CD8-positive, alpha-beta T cell (primary cell): ENCODE measurements at regions of chr17 and their contacts with region 1.

Region 1: DNA sequence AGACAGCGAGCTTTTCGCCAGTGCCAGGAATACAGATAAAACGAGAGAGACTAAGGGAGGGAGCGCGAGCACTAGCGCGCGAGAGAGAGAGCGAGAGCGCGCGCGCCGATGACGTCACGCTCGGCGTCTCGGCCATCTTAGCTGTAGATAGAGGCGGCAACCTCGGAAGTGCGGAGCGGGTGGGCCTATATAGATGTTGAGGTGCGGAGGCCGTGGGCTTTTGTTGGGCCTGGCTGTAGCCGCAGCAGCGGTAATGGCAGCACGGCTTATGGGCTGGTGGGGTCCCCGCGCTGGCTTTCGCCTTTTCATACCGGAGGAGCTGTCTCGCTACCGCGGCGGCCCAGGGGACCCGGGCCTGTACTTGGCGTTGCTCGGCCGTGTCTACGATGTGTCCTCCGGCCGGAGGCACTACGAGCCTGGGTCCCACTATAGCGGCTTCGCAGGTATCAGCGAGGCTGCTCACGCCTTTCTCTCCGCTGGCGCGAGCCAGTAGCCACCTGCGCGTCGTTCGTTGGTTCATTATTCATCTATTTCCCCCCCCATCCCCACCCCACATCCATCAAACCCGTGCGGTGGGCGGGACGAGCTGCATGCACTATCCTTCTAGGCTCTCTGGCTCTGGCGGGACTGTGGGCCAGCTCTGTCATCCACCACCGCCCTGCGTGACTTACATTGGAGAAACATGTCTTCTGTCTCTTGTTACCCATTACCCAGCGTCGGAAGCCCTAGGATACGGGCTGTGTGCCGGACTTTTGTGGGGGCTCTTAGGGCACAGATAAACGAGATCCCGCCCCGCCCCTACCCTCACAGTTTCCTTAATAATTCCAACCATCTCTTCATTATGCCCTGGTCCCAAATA is 795 bp downstream of the CYB5D2 start:
- DNase-seq: peak; percentile 81 to 98 (median 91)
- ATAC-seq: peak; percentile 63
- H3K4me3 ChIP-seq: peak overlapping the region; percentile 72 to 88
- H3K4me3 Mint-ChIP-seq: peak overlapping the region; percentile 99
- H3K27ac ChIP-seq: peak overlapping the region; percentile 98
- H3K27ac Mint-ChIP-seq: peak overlapping the region; percentile 100
- H3K4me1 ChIP-seq: peaks cover 42% of the 10 kb centered on the region
- H3K4me1 Mint-ChIP-seq: peaks cover 43% of the 10 kb centered on the region
- H3K27me3 ChIP-seq: no peaks in the 10 kb centered on the region
- H3K27me3 Mint-ChIP-seq: no peaks in the 10 kb centered on the region
- CTCF ChIP-seq: no peak

Region 2: DNA sequence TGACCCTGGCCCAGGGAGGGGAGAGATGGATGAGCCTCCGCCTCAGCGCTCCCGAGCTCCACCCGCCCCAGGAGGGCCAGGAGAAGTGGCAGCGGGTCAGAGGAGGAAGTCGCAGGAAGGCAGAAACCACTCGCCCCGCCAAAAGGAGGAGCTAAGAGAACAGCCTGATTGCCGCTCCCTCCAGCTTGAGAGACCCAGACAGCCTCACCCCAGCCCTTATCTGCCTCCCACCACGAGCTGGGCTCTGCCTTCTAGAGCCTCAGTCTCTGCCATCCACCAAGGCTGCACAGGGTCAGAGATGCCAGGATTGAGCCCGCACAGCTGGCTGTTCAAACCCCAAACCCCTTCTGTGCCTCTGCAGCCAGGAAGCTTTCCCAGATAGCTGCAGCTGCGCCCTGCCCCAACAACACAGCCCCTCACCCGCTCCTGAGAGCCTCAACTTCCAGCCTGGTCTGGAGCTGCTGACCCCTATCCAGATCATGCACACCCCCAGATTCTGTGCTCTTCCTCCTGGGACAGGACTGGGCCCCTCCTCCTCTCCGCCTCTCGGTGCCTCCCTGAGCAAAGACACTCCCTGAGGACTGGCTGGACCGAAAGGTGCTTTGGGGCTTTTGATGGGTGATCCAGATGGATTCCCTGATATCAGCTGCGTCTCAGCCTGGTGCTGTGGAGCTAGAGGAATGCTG is 178.5 kb before region 1 on chr17:
- CTCF ChIA-PET with region 1: interaction called, 3 read pairs
- POLR2A ChIA-PET with region 1: interaction called, 5 read pairs
- intact Hi-C with region 1: loop called (anchors 2 kb)
- DNase-seq: peak; percentile 33 to 81 (median 73)
- ATAC-seq: peak; percentile 51
- H3K4me3 ChIP-seq: peak overlapping the region; percentile 71 to 83
- H3K4me3 Mint-ChIP-seq: peak overlapping the region; percentile 91
- H3K27ac ChIP-seq: peak overlapping the region; percentile 76 to 77
- H3K27ac Mint-ChIP-seq: peak overlapping the region; percentile 94
- H3K4me1 ChIP-seq: peaks cover 39% of the 10 kb centered on the region
- H3K4me1 Mint-ChIP-seq: peaks cover 40% of the 10 kb centered on the region
- H3K27me3 ChIP-seq: no peaks in the 10 kb centered on the region
- H3K27me3 Mint-ChIP-seq: no peaks in the 10 kb centered on the region
- CTCF ChIP-seq: no peak

Region 3: GRCh38 chr17:4167786-4168185 is 24.0 kb after region 1 on chr17:
- CTCF ChIA-PET with region 1: no interaction called
- POLR2A ChIA-PET with region 1: interaction called, 20 read pairs
- intact Hi-C with region 1: no loop called
- DNase-seq: peak in 5 of 9 experiments; percentile 19 to 57 (median 49)
- ATAC-seq: peak; percentile 66
- H3K4me3 ChIP-seq: no peak overlapping the region
- H3K4me3 Mint-ChIP-seq: no peak overlapping the region
- H3K27ac ChIP-seq: peak overlapping the region in 1 of 2 experiments; percentile 0
- H3K27ac Mint-ChIP-seq: peak overlapping the region; percentile 88
- H3K4me1 ChIP-seq: peaks cover 8% of the 10 kb centered on the region
- H3K4me1 Mint-ChIP-seq: peaks cover 10% of the 10 kb centered on the region
- H3K27me3 ChIP-seq: no peaks in the 10 kb centered on the region
- H3K27me3 Mint-ChIP-seq: no peaks in the 10 kb centered on the region
- CTCF ChIP-seq: no peak

Region 4: GRCh38 chr17:4263282-4264215 is 119.8 kb after region 1 on chr17 and contains the start of gene ANKFY1:
- CTCF ChIA-PET with region 1: no interaction called
- POLR2A ChIA-PET with region 1: interaction called, 3 read pairs
- intact Hi-C with region 1: loop called (anchors 1 to 5 kb)
- DNase-seq: peak; percentile 95 to 98 (median 97)
- ATAC-seq: peak; percentile 95
- H3K4me3 ChIP-seq: peak within 1 kb of the TSS; percentile 86 to 99
- H3K4me3 Mint-ChIP-seq: peak within 1 kb of the TSS; percentile 90
- H3K27ac ChIP-seq: peak within 1 kb of the TSS; percentile 81 to 88
- H3K27ac Mint-ChIP-seq: peak within 1 kb of the TSS; percentile 91
- H3K4me1 ChIP-seq: peaks cover 21% of the 10 kb centered on the region
- H3K4me1 Mint-ChIP-seq: peaks cover 40% of the 10 kb centered on the region
- H3K27me3 ChIP-seq: no peaks in the 10 kb centered on the region
- H3K27me3 Mint-ChIP-seq: no peaks in the 10 kb centered on the region
- CTCF ChIP-seq: no peak
- total RNA-seq, gene ANKFY1: 26.2 to 28.6 TPM

Region 5: DNA sequence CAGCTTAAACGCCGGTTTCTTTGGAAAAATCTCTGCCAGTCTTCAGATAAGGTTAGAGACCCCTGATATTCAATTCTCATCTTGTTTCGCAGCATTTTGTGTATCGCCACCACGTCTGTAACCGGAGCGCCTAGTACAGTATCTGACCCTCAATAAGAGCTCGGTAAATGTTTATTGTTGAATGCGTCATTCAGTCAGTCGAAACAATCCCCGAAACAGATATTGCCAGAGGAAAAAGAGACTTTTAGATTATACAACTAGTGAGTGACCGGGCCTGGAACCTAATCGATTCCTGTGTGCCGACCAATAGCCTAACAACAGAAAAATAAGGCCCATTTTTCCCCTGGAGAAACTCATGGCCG is 559.5 kb after region 1 on chr17:
- CTCF ChIA-PET with region 1: no interaction called
- POLR2A ChIA-PET with region 1: no interaction called
- intact Hi-C with region 1: loop called (anchors 2 to 5 kb)
- DNase-seq: no peak
- ATAC-seq: peak; percentile 11
- H3K4me3 ChIP-seq: peak overlapping the region; percentile 83 to 96
- H3K4me3 Mint-ChIP-seq: peak overlapping the region; percentile 92
- H3K27ac ChIP-seq: peak overlapping the region; percentile 86 to 96
- H3K27ac Mint-ChIP-seq: peak overlapping the region; percentile 91
- H3K4me1 ChIP-seq: peaks cover 26% of the 10 kb centered on the region
- H3K4me1 Mint-ChIP-seq: peaks cover 39% of the 10 kb centered on the region
- H3K27me3 ChIP-seq: no peaks in the 10 kb centered on the region
- H3K27me3 Mint-ChIP-seq: no peaks in the 10 kb centered on the region
- CTCF ChIP-seq: no peak

Region 6: GRCh38 chr17:5419356-5419958 is 1275.7 kb after region 1 on chr17 and contains the start of gene NUP88:
- CTCF ChIA-PET with region 1: no interaction called
- POLR2A ChIA-PET with region 1: no interaction called
- intact Hi-C with region 1: loop called in 1 of 2 experiments (anchors 10 kb)
- DNase-seq: peak; percentile 92 to 99 (median 96)
- ATAC-seq: peak; percentile 87
- H3K4me3 ChIP-seq: peak within 1 kb of the TSS; percentile 93 to 96
- H3K4me3 Mint-ChIP-seq: peak within 1 kb of the TSS; percentile 99
- H3K27ac ChIP-seq: peak within 1 kb of the TSS; percentile 91 to 99
- H3K27ac Mint-ChIP-seq: peak within 1 kb of the TSS; percentile 99
- H3K4me1 ChIP-seq: peaks cover 44% of the 10 kb centered on the region
- H3K4me1 Mint-ChIP-seq: peaks cover 47% of the 10 kb centered on the region
- H3K27me3 ChIP-seq: no peaks in the 10 kb centered on the region
- H3K27me3 Mint-ChIP-seq: no peaks in the 10 kb centered on the region
- CTCF ChIP-seq: no peak
- total RNA-seq, gene NUP88: 149 to 156 TPM